Heart left ventricle (tissue), 16 donors: ENCODE measurements at regions of chr9 and their contacts with region 1.

Region 1: DNA sequence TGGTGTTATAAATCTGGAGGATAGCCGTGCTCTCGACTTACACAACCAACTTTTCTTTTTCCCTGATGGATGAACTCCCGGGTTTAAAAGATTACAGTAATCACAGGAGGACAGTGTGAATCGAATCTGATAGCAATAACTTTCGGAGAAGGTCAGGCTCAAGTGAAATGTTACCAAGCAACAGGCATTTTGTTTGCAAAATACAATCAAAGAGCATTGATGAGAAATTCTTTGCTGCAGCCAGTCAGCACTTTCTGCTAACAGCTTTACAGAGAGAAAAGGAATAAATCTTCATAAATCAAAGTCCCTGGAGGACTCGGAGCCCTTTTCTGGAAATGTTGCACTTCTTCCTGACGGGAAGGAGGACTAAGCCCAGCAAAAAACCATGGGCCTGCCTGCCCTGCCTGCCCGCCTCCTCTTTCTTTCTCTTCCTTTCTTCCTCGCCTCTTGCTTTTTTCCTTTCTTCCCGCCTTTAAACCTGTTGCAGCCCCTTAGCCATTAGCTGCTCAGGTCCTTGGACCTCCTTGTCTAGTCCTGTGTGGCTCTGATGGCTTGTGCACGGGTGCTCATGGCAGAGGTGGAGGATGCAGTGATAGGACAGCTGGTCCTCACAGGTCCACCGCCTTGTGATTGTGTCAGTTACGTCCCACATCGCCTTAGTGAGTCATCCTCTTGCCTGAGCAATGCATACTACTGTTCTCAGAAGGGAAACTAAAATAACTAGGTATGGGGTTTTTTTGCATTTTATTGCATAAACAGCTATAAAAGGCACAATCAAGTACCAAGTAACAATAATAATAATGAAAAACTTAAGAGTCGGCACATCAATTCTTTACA is 6.2 kb downstream of the DMRT3 start:
- DNase-seq: no peak
- ATAC-seq: no peak
- H3K4me3 ChIP-seq: no peak overlapping the region
- H3K27ac ChIP-seq: no peak overlapping the region
- H3K4me1 ChIP-seq: no peaks in the 10 kb centered on the region
- H3K27me3 ChIP-seq: peaks cover 27 to 98% (median 74%) of the 10 kb centered on the region in 9 donors
- CTCF ChIP-seq: no peak
- POLR2A ChIP-seq: no peak

Region 2: GRCh38 chr9:785997-786751 is 196.4 kb before region 1 on chr9:
- intact Hi-C with region 1: loop called in 1 of 10 experiments (anchors 5 kb)
- DNase-seq: no peak
- ATAC-seq: no peak
- H3K4me3 ChIP-seq: no peak overlapping the region
- H3K27ac ChIP-seq: no peak overlapping the region
- H3K4me1 ChIP-seq: no peaks in the 10 kb centered on the region
- H3K27me3 ChIP-seq: no peaks in the 10 kb centered on the region
- CTCF ChIP-seq: no peak
- POLR2A ChIP-seq: no peak

Region 3: DNA sequence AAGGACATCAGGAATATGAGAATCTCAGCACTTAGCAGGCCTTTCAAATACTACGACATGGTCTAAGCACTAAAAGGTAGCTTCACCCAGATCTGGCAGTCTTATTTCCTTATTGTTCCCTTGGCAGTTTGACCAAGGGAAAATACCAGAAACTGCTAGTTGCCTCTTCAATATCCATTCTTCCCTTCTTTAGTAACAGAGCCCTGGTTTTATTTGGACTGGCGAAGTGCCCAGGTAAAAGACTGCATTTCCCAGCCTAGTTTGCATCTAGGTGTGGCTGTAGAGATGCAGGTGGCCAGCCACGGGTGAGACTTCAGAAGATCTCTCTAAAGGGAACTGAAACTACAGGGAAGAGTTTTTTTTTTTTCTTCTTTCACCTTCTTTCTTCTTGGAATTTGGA is 89.1 kb after region 1 on chr9:
- intact Hi-C with region 1: no loop called
- DNase-seq: no peak
- ATAC-seq: no peak
- H3K4me3 ChIP-seq: no peak overlapping the region
- H3K27ac ChIP-seq: no peak overlapping the region
- H3K4me1 ChIP-seq: no peaks in the 10 kb centered on the region
- H3K27me3 ChIP-seq: peaks cover 0 to 4% (median 0%) of the 10 kb centered on the region in 9 donors
- CTCF ChIP-seq: no peak
- POLR2A ChIP-seq: no peak